Sigmoid colon (tissue), 7 donors: ENCODE measurements at regions of chr16 and their contacts with region 1.

Region 1: GRCh38 chr16:53054670-53055485 is at the start of gene CHD9:
- DNase-seq: peak; percentile 94
- H3K4me3 ChIP-seq: peak within 1 kb of the TSS; percentile 51 to 74 (median 64)
- H3K27ac ChIP-seq: peak within 1 kb of the TSS; percentile 84 to 92 (median 90)
- H3K4me1 ChIP-seq: peaks cover 0 to 50% (median 42%) of the 10 kb centered on the region in 4 donors
- H3K27me3 ChIP-seq: no peaks in the 10 kb centered on the region
- CTCF ChIP-seq: peak; percentile 99 to 100 (median 99)
- EP300 ChIP-seq: no peak
- POLR2A ChIP-seq: no peak
- total RNA-seq, gene CHD9: 55.5 to 88.5 (median 85.5) TPM

Region 2: DNA sequence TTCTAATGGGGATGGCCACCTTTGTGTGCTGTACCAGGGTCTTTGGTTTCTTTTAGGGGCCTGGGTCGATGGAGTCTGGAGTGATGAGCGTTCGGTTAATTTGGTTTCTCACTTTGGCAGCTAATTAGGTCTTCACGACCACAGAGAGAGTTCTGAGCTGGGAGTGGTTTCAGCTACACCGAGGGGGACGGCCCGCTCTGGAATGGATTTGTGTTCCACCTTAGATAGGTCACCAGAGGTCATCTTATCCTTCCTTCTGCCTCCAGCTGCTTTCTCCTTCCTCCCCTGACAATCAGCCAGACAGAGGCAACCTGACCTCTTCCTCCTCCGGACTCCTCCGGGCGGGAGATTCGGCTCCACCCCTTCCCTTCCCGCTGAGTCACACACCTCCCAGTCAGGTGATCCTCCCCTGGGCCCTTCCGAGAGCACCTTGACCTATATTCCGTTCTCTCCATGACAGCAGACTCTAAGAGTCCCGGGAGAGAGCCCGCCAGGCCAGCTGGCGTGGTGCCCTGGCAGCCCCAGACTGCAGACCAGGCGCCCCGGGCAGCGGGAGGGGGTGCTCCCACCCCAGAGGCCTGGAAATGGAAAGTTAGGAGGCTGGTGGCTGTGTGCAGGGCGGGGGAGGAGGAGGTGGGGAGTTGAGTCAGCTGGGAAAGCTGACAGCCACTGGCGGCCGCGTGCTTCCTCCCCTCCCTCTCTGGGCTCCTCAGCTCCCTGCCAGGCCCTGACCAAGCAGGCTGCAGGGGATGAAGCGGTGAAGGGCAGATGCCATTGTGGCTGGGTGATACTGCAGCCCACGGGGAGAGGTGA is 44.6 kb after region 1 on chr16:
- intact Hi-C with region 1: loop called (anchors 1 kb)
- DNase-seq: peak; percentile 97
- H3K4me3 ChIP-seq: peak overlapping the region; percentile 10 to 41 (median 36)
- H3K27ac ChIP-seq: peak overlapping the region; percentile 93 to 96 (median 94)
- H3K4me1 ChIP-seq: peaks cover 0 to 62% (median 47%) of the 10 kb centered on the region in 4 donors
- H3K27me3 ChIP-seq: no peaks in the 10 kb centered on the region
- CTCF ChIP-seq: no peak
- EP300 ChIP-seq: peak in 2 of 4 donors; percentile 16 to 54
- POLR2A ChIP-seq: no peak

Region 3: GRCh38 chr16:53130159-53131049 is 75.5 kb after region 1 on chr16:
- intact Hi-C with region 1: loop called (anchors 2 kb)
- DNase-seq: peak; percentile 99
- H3K4me3 ChIP-seq: peak overlapping the region; percentile 56 to 95 (median 90)
- H3K27ac ChIP-seq: peak overlapping the region; percentile 94 to 98 (median 96)
- H3K4me1 ChIP-seq: peaks cover 0 to 45% (median 36%) of the 10 kb centered on the region in 4 donors
- H3K27me3 ChIP-seq: no peaks in the 10 kb centered on the region
- CTCF ChIP-seq: peak in 2 of 4 experiments; percentile 10 to 53
- EP300 ChIP-seq: no peak
- POLR2A ChIP-seq: peak; percentile 20 to 51

Region 4: DNA sequence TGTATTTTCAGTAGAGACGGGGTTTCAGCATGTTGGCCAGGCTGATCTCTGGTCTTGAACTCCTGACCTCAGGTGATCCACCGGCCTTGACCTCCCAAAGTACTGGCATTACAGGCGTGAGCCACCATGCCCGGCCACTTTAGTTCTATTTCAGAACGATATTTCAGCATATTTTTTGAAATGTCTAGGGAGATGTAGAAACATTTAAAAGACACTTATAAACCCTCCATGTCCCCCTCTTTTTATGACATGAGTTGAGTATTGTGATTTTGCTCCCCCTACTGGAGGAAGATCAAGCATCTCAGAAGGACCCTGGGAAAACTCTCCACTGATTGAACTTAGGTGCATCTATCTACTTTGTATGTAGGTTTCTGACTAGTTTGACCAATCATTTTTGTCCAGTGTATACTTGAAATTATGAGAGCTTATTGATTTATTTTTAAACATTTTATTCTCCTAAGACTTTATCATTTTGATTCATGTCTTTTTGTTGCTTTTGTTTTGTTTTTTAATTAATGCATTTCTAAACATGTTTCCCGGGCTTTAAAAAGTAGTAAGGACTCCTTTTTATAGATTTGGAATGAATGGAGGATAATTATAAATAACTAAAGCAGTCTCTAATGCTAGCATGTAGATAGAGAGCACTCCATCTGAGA is 105.0 kb after region 1 on chr16:
- intact Hi-C with region 1: loop called (anchors 1 kb)
- DNase-seq: no peak
- H3K4me3 ChIP-seq: no peak overlapping the region
- H3K27ac ChIP-seq: no peak overlapping the region
- H3K4me1 ChIP-seq: no peaks in the 10 kb centered on the region
- H3K27me3 ChIP-seq: no peaks in the 10 kb centered on the region
- CTCF ChIP-seq: peak; percentile 26 to 66 (median 58)
- EP300 ChIP-seq: no peak
- POLR2A ChIP-seq: no peak

Region 5: GRCh38 chr16:53207810-53208752 is 153.2 kb after region 1 on chr16:
- intact Hi-C with region 1: loop called (anchors 2 kb)
- DNase-seq: no peak
- H3K4me3 ChIP-seq: peak overlapping the region; percentile 9 to 43 (median 40)
- H3K27ac ChIP-seq: peak overlapping the region; percentile 79 to 82 (median 81)
- H3K4me1 ChIP-seq: peaks cover 0 to 63% (median 31%) of the 10 kb centered on the region in 4 donors
- H3K27me3 ChIP-seq: no peaks in the 10 kb centered on the region
- CTCF ChIP-seq: peak; percentile 38 to 55 (median 52)
- EP300 ChIP-seq: no peak
- POLR2A ChIP-seq: no peak

Region 6: DNA sequence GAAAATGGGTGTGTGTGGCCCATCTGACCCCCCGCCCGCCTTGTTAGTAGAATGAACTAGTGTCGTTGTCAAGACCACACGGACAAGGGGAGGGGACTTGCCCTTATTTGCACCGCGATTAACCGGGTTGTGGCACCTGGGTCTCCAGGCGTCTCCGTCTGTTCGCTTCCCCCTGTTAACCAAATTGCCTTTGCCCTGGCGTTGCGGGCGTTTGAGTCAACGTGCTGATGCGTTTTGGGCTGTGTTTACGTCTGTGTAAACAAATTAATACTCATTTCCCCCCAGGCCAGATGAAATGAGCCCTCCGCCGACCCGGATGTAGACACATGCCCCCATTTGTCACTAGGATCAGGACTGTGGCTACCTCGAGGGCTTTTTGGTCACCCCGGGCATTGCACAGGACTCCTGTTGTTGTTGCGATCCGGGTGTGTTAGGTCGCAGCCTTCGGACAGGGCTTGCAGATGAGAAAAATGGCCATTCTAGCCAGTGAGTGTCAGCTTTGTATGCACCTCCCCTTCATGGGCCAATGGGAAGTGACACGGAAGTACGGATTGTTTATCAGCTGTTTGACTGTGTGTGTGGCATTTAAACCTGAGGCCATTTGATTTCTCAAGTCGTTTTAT is 380.3 kb after region 1 on chr16:
- intact Hi-C with region 1: loop called (anchors 5 kb)
- DNase-seq: peak; percentile 87
- H3K4me3 ChIP-seq: peak overlapping the region; percentile 82 to 97 (median 93)
- H3K27ac ChIP-seq: peak overlapping the region; percentile 95 to 97 (median 97)
- H3K4me1 ChIP-seq: peaks cover 0 to 28% (median 11%) of the 10 kb centered on the region in 4 donors
- H3K27me3 ChIP-seq: no peaks in the 10 kb centered on the region
- CTCF ChIP-seq: no peak
- EP300 ChIP-seq: no peak
- POLR2A ChIP-seq: peak in 1 of 2 donors; percentile 49

Region 7: DNA sequence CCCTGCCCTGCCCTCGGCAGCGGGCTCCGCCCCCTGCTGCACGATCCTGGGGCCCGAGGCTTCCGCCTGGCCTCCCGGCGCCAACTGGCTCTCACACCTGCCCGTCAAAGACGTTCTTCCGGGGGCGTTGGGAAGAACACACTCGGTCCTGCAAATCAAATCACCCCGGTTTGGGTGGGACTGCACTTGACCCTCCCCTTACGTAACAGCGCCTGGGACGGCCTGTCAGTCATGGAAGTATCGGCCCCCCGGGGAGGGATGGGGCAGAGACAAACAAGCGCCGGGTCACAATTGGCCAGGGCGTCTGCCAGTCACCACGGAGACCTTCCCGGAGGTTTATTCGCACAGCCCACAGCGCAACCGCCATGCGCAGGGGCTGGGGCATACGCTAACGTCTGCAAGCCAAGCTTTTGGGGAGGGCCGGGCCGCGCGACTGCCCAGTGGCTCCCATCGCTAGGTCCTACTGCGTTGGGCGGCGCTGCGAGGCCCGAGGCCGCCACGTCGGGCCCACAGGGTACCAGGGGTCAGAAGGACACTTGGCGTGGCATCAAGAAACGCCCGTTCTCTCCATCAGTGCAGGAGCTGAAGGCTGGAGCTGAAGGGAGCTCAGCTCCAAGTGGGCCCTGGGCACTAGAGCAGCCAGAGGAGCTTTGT is 448.5 kb after region 1 on chr16:
- intact Hi-C with region 1: loop called (anchors 5 kb)
- DNase-seq: peak; percentile 100
- H3K4me3 ChIP-seq: peak overlapping the region; percentile 77 to 99 (median 84)
- H3K27ac ChIP-seq: peak overlapping the region; percentile 92 to 99 (median 96)
- H3K4me1 ChIP-seq: peaks cover 0 to 33% (median 28%) of the 10 kb centered on the region in 4 donors
- H3K27me3 ChIP-seq: no peaks in the 10 kb centered on the region
- CTCF ChIP-seq: no peak
- EP300 ChIP-seq: peak in 1 of 4 donors; percentile 6
- POLR2A ChIP-seq: peak; percentile 85 to 90